Activated CD4-positive, alpha-beta memory T cell treated with anti-CD3 and anti-CD28 coated beads, Interleukin-2, amount 10 ng/mL, durations not matched to agents 7 days and 5 days (primary cell): ENCODE measurements at regions of chr11 and their contacts with region 1.

Region 1: GRCh38 chr11:19553683-19554333 is 158.8 kb upstream of the NAV2 start:
- DNase-seq: peak; percentile 70
- H3K4me3 Mint-ChIP-seq: no peak overlapping the region
- H3K27ac Mint-ChIP-seq: no peak overlapping the region
- H3K4me1 Mint-ChIP-seq: no peaks in the 10 kb centered on the region
- H3K27me3 Mint-ChIP-seq: peaks cover 11% of the 10 kb centered on the region

Region 2: DNA sequence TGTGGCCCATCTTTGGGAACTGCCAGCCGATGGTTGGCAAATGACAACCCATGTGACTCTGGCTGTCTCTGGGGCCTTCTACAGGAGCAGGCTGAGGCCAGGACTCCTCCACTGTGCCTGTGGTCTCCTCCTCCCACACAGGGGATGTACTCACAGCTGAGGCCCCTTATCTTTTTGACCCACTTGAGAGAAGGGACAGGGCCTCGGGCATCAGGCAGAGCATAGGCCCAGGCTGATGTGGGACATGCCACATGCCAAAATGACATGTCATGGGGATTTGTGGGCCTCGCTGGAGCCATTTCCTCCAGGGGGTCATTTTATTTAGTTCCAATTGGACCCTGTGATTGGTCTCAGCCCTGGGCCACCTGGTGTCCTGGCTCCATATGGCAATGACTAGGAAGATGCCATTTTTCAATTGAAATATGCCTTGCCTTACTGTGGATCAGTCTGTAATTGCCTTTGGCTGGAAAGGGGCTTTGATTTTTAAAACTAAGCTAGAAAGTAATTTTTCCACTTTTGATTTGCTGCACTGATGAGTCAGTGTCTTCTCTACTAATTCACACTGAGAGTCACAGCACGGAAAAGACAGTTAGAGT is 12.3 kb before region 1 on chr11:
- CTCF ChIA-PET with region 1: interaction called, 10 read pairs
- POLR2A ChIA-PET with region 1: interaction called, 3 read pairs
- DNase-seq: no peak
- H3K4me3 Mint-ChIP-seq: no peak overlapping the region
- H3K27ac Mint-ChIP-seq: no peak overlapping the region
- H3K4me1 Mint-ChIP-seq: no peaks in the 10 kb centered on the region
- H3K27me3 Mint-ChIP-seq: peaks cover 17% of the 10 kb centered on the region